A673 (cell line): ENCODE measurements at regions of chr11 and their contacts with region 1.

Region 1: GRCh38 chr11:62726915-62727763 is at the start of gene HNRNPUL2:
- DNase-seq: peak; percentile 100
- H3K4me3 ChIP-seq: peak within 1 kb of the TSS; percentile 86
- H3K27ac ChIP-seq: peak within 1 kb of the TSS; percentile 98
- H3K4me1 ChIP-seq: peaks cover 11% of the 10 kb centered on the region
- H3K27me3 ChIP-seq: no peaks in the 10 kb centered on the region
- CTCF ChIP-seq: no peak
- total RNA-seq, gene HNRNPUL2: 104 and 105 TPM in 2 replicates

Region 2: GRCh38 chr11:61827571-61828378 is 899.4 kb before region 1 on chr11 and contains the start of gene FADS2:
- CTCF ChIA-PET with region 1: no interaction called
- POLR2A ChIA-PET with region 1: no interaction called
- intact Hi-C with region 1: loop called (anchors 2 kb)
- DNase-seq: peak; percentile 99
- H3K4me3 ChIP-seq: peak within 1 kb of the TSS; percentile 96
- H3K27ac ChIP-seq: peak within 1 kb of the TSS; percentile 97
- H3K4me1 ChIP-seq: peaks cover 35% of the 10 kb centered on the region
- H3K27me3 ChIP-seq: no peaks in the 10 kb centered on the region
- CTCF ChIP-seq: peak; percentile 38; the same call in 1 of the 2 replicates
- total RNA-seq, gene FADS2: 1,097 and 1,272 TPM in 2 replicates

Region 3: GRCh38 chr11:62771144-62772021 is 44.2 kb after region 1 on chr11 and contains the start of gene TAF6L:
- CTCF ChIA-PET with region 1: no interaction called
- POLR2A ChIA-PET with region 1: no interaction called
- intact Hi-C with region 1: loop called (anchors 5 kb)
- DNase-seq: peak; percentile 100
- H3K4me3 ChIP-seq: peak within 1 kb of the TSS; percentile 70
- H3K27ac ChIP-seq: peak within 1 kb of the TSS; percentile 89
- H3K4me1 ChIP-seq: peaks cover 21% of the 10 kb centered on the region
- H3K27me3 ChIP-seq: no peaks in the 10 kb centered on the region
- CTCF ChIP-seq: no peak
- total RNA-seq, gene TAF6L: 70.0 and 70.9 TPM in 2 replicates

Region 4: DNA sequence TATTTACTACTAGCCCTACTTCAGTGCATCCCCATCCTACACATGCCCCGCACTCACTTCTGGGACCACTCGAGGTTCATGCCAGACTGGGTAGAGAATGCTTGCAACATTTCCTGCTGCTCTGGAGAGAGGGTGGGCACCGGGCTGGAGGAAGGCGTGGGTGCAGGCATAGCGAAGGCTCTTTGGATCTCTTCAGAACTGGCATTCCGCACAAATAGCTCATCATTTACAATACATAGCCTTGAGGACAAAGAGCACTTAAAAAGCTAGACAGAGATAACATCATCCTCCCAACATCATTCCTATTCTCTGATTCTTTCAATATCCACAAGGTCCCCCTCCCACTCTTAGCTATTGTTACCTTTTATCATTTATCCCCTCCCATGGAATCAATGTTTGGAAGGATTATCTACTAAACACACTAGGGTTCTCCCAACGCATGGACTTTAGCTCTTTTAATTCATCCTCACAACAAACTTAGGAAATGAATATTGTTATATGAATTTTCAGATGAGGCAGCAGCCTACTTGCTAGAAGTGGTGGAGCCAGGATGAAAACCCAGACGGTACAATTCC is 67.1 kb after region 1 on chr11:
- CTCF ChIA-PET with region 1: no interaction called
- POLR2A ChIA-PET with region 1: no interaction called
- intact Hi-C with region 1: no loop called
- DNase-seq: peak; percentile 83
- H3K4me3 ChIP-seq: no peak overlapping the region
- H3K27ac ChIP-seq: peak overlapping the region; percentile 14
- H3K4me1 ChIP-seq: peaks cover 28% of the 10 kb centered on the region
- H3K27me3 ChIP-seq: no peaks in the 10 kb centered on the region
- CTCF ChIP-seq: no peak